ENCODE measurements at regions of chr11 and their contacts with region 1.

Region 1: GRCh38 chr11:66883016-66883968 is 26.4 kb downstream of the LRFN4 start:
- DNase-seq: peak; percentile 82
- H3K4me3 ChIP-seq: peak overlapping the region in 3 of 4 donors; percentile 28 to 46 (median 37)
- H3K27ac ChIP-seq: peak overlapping the region in 3 of 4 donors; percentile 12 to 42 (median 35)
- H3K4me1 ChIP-seq: peaks cover 0 to 14% (median 9%) of the 10 kb centered on the region in 4 donors
- H3K27me3 ChIP-seq: no peaks in the 10 kb centered on the region
- CTCF ChIP-seq: peak; percentile 56 to 79 (median 70)
- EP300 ChIP-seq: no peak
- POLR2A ChIP-seq: no peak

Region 2: GRCh38 chr11:66694732-66695207 is 188.5 kb before region 1 on chr11:
- intact Hi-C with region 1: loop called (anchors 1 kb)
- DNase-seq: peak; percentile 93
- H3K4me3 ChIP-seq: no peak overlapping the region
- H3K27ac ChIP-seq: no peak overlapping the region
- H3K4me1 ChIP-seq: no peaks in the 10 kb centered on the region
- H3K27me3 ChIP-seq: no peaks in the 10 kb centered on the region
- CTCF ChIP-seq: peak; percentile 86 to 96 (median 93)
- EP300 ChIP-seq: no peak
- POLR2A ChIP-seq: no peak

Region 3: GRCh38 chr11:66784575-66784974 is 98.7 kb before region 1 on chr11:
- intact Hi-C with region 1: no loop called
- DNase-seq: no peak
- H3K4me3 ChIP-seq: no peak overlapping the region
- H3K27ac ChIP-seq: no peak overlapping the region
- H3K4me1 ChIP-seq: peaks cover 0 to 10% (median 4%) of the 10 kb centered on the region in 4 donors
- H3K27me3 ChIP-seq: no peaks in the 10 kb centered on the region
- CTCF ChIP-seq: no peak
- EP300 ChIP-seq: no peak
- POLR2A ChIP-seq: no peak

Region 4: GRCh38 chr11:66842896-66843775 is 40.2 kb before region 1 on chr11 and contains the start of gene RCE1:
- intact Hi-C with region 1: loop called (anchors 5 kb)
- DNase-seq: peak; percentile 94
- H3K4me3 ChIP-seq: peak within 1 kb of the TSS; percentile 72 to 90 (median 82)
- H3K27ac ChIP-seq: peak within 1 kb of the TSS; percentile 92 to 98 (median 96)
- H3K4me1 ChIP-seq: peaks cover 0 to 36% (median 27%) of the 10 kb centered on the region in 4 donors
- H3K27me3 ChIP-seq: no peaks in the 10 kb centered on the region
- CTCF ChIP-seq: no peak
- EP300 ChIP-seq: no peak
- POLR2A ChIP-seq: peak; percentile 39 to 72
- total RNA-seq, gene RCE1: 6.1 to 23.0 (median 9.1) TPM

Region 5: GRCh38 chr11:66855574-66856495 is 27.5 kb before region 1 on chr11:
- intact Hi-C with region 1: loop called (anchors 2 kb)
- DNase-seq: peak; percentile 96
- H3K4me3 ChIP-seq: peak overlapping the region; percentile 45 to 75 (median 56)
- H3K27ac ChIP-seq: peak overlapping the region; percentile 85 to 90 (median 86)
- H3K4me1 ChIP-seq: peaks cover 0 to 15% (median 10%) of the 10 kb centered on the region in 4 donors
- H3K27me3 ChIP-seq: no peaks in the 10 kb centered on the region
- CTCF ChIP-seq: no peak
- EP300 ChIP-seq: no peak
- POLR2A ChIP-seq: peak; percentile 51 to 70

Region 6: GRCh38 chr11:66970808-66971442 is 87.6 kb after region 1 on chr11:
- intact Hi-C with region 1: no loop called
- DNase-seq: peak; percentile 77
- H3K4me3 ChIP-seq: no peak overlapping the region
- H3K27ac ChIP-seq: peak overlapping the region in 2 of 4 donors; percentile 11 to 70
- H3K4me1 ChIP-seq: no peaks in the 10 kb centered on the region
- H3K27me3 ChIP-seq: no peaks in the 10 kb centered on the region
- CTCF ChIP-seq: no peak
- EP300 ChIP-seq: no peak
- POLR2A ChIP-seq: no peak